ENCODE measurements at regions of chr6 and their contacts with region 1.

Region 1: DNA sequence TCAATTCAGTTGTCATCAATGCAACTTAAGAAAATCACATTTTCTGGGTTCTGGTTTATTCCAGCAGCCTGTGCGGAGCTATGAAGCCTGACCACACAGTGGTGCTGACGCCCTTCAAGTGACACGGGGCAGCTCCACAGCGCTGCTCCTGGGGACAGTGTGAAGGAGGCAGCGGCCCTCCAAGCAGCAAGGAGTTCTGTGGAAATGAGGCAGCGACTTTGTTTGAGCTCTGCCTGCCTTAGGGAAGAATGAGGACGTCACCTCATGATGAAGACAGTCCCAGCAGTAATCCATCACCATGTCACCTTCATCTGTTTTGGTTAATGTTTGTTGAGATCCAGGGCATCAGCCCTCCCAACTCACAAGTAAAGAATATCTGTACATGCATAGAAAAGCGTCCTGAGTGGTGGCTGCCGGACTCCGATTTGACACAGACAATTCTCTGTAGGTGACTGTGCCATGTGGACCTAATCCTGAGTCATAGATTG is 168.5 kb upstream of the UST start:
- DNase-seq: peak; percentile 79
- H3K4me3 Mint-ChIP-seq: no peak overlapping the region
- H3K27ac Mint-ChIP-seq: no peak overlapping the region
- H3K4me1 Mint-ChIP-seq: no peaks in the 10 kb centered on the region
- H3K27me3 Mint-ChIP-seq: no peaks in the 10 kb centered on the region
- CTCF ChIP-seq: peak; percentile 83

Region 2: GRCh38 chr6:148479497-148479896 is 98.8 kb before region 1 on chr6:
- CTCF ChIA-PET with region 1: no interaction called
- POLR2A ChIA-PET with region 1: no interaction called
- intact Hi-C with region 1: no loop called
- DNase-seq: no peak
- H3K4me3 Mint-ChIP-seq: no peak overlapping the region
- H3K27ac Mint-ChIP-seq: no peak overlapping the region
- H3K4me1 Mint-ChIP-seq: no peaks in the 10 kb centered on the region
- H3K27me3 Mint-ChIP-seq: no peaks in the 10 kb centered on the region
- CTCF ChIP-seq: no peak

Region 3: DNA sequence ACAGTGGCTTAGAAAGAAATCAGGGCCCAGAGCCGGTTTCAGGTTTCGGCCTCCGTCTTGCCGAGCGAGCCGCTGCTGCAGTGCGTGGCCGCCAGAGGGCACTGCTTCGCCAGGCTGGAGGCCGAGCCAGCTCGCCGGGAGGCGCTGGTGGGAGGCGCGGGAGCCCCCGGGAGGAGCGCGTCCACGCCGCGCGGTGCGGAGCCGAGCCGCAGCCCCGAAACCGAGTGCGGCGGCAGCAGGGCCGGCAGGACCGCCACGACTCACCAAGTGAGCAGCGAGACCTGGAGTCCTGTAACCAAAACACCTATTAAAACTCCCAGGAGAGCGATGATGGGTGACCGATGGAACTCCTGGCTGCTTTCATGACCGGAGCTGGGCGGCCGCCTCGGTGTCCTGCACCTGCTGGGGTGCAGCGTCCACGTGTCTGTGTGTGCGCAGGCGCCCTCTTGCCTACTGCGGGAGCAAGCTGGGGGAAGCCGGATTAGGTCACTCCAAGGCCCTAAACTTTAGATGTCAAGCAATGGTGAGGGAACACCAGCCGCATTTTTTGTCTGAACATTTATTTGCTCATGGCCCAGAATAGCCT is 18.3 kb before region 1 on chr6:
- CTCF ChIA-PET with region 1: interaction called, 22 read pairs
- POLR2A ChIA-PET with region 1: no interaction called
- intact Hi-C with region 1: no loop called
- DNase-seq: peak; percentile 47
- H3K4me3 Mint-ChIP-seq: peak overlapping the region; percentile 50
- H3K27ac Mint-ChIP-seq: no peak overlapping the region
- H3K4me1 Mint-ChIP-seq: no peaks in the 10 kb centered on the region
- H3K27me3 Mint-ChIP-seq: no peaks in the 10 kb centered on the region
- CTCF ChIP-seq: peak; percentile 96

Region 4: DNA sequence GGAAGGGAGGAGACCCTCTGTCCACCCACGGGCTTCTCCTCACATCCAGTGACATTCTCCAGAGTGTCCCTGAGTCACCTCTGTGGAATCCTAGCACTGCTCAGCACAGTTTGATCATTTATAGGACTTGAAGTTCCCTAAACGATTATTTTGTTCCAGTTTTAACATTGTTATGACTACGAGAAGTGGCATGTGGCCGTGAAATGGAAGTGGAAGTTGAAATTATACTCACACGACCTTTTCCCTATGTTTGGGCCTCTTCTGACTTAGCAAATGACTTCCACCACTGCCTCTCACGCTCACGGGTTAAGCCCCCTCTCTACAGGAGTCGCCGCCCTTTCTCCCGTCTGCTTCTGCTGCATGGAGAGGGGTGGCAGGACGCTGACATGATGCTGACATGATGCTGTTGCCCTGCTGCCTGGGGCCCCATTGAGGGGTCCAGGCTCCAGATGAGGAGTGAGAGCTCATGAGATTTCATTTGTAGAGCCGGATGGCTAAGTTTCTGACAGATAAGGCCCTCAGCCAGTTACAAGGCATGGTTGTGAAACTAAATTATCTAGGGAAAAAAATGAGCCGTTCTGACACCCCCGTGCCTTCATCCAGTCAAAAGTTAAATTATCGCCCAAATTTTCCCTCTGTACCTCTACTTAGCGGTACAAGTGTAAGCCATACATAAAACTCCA is 15.0 kb after region 1 on chr6:
- CTCF ChIA-PET with region 1: interaction called, 22 read pairs
- POLR2A ChIA-PET with region 1: no interaction called
- intact Hi-C with region 1: no loop called
- DNase-seq: no peak
- H3K4me3 Mint-ChIP-seq: no peak overlapping the region
- H3K27ac Mint-ChIP-seq: no peak overlapping the region
- H3K4me1 Mint-ChIP-seq: peaks cover 10% of the 10 kb centered on the region
- H3K27me3 Mint-ChIP-seq: no peaks in the 10 kb centered on the region
- CTCF ChIP-seq: no peak

Region 5: DNA sequence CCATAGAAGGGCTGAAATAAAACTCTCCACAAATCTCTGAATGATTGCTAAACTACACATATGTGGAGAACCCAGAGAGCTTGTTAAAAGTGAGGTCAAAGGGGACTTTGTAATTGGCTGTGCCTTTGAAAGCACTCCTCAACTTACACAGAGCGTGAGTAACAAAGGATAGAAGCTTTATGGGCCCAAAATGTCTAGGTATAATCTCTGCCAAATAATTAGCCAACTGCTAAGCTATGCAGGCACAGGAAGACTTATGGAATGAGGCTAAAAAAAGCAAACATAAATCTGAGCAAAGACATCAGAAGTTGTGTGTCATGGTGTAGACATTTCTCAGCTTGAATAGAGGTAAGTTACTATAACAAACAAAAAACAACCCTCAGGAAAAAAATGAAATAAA is 145.2 kb after region 1 on chr6:
- CTCF ChIA-PET with region 1: interaction called, 15 read pairs
- POLR2A ChIA-PET with region 1: no interaction called
- intact Hi-C with region 1: no loop called
- DNase-seq: peak; percentile 38
- H3K4me3 Mint-ChIP-seq: no peak overlapping the region
- H3K27ac Mint-ChIP-seq: no peak overlapping the region
- H3K4me1 Mint-ChIP-seq: peaks cover 8% of the 10 kb centered on the region
- H3K27me3 Mint-ChIP-seq: no peaks in the 10 kb centered on the region
- CTCF ChIP-seq: no peak

Region 6: DNA sequence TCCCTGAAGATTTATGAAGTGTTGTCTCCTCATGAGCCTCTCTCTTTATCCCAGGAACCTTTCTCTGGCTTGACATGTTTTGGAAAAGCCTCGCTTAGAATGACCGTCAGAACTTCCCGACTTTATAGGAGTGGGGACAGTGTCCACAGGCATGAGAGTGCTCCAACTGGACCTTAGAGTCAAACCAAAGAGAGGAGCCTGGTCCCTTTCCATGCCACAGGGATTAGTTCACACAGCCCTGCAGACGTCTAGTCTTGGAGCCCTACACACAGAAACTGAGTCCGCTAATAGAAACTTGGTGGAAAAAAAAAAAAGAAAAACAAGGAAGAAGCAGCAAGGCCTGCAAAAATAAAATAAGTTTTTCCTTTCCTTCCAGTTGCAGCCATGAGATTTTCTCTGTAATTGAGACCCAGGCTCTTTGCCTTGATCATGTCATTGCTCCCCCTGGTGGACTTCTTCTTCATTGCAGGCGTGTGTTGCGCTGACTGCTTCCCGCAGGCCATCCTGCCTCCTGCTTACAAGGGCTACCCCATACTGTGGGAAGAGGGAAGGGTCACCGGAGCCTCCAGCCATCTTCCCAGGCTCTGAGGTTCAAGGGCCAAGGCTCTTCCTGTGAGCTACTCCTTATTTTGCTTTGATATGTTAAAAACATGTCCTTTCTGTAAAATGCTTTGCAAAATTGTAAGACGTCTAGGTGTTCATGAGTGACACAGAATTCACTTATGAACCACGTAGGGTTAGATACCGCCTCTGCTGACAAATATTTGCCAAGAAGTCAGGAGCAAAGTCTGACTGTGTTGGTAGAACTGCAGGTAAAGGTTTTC is 369.5 kb after region 1 on chr6:
- CTCF ChIA-PET with region 1: interaction called, 27 read pairs
- POLR2A ChIA-PET with region 1: no interaction called
- intact Hi-C with region 1: loop called (anchors 1 kb)
- DNase-seq: peak; percentile 86
- H3K4me3 Mint-ChIP-seq: no peak overlapping the region
- H3K27ac Mint-ChIP-seq: no peak overlapping the region
- H3K4me1 Mint-ChIP-seq: peaks cover 8% of the 10 kb centered on the region
- H3K27me3 Mint-ChIP-seq: no peaks in the 10 kb centered on the region
- CTCF ChIP-seq: peak; percentile 81

Region 7: DNA sequence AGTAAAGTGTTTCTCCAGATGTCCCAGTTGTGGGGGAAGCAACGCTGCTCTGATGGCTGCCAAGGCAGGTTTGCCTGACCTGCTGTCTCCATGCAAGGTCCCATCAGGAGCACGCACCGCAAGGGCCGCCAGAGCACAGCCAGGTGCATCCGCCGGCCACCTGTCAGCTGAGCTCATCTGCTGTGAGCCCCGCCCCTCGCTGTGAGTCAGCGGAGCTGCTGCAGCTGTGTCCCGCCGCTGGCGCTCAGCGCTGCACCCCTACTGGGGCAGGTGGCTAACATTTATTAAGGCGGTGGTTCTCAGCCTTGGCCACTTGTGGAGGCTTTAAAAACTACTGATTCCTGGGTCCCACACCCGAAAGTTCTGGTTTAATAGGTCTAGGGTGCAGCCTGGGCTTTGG is 394.2 kb after region 1 on chr6:
- CTCF ChIA-PET with region 1: interaction called, 16 read pairs
- POLR2A ChIA-PET with region 1: no interaction called
- intact Hi-C with region 1: no loop called
- DNase-seq: peak; percentile 77
- H3K4me3 Mint-ChIP-seq: no peak overlapping the region
- H3K27ac Mint-ChIP-seq: no peak overlapping the region
- H3K4me1 Mint-ChIP-seq: peaks cover 5% of the 10 kb centered on the region
- H3K27me3 Mint-ChIP-seq: no peaks in the 10 kb centered on the region
- CTCF ChIP-seq: no peak

Measured in MCF 10A (cell line).